Cardiac septum (tissue), 1 donor: ENCODE measurements at regions of chr5 and their contacts with region 1.

Region 1: GRCh38 chr5:142145106-142145900 is 36.7 kb downstream of the NDFIP1 start:
- DNase-seq: no peak

Region 2: GRCh38 chr5:141691867-141692532 is 453.3 kb before region 1 on chr5:
- intact Hi-C with region 1: loop called (anchors 10 kb)
- DNase-seq: peak; percentile 95

Region 3: GRCh38 chr5:141989718-141990117 is 155.6 kb before region 1 on chr5:
- intact Hi-C with region 1: loop called (anchors 2 kb)
- DNase-seq: no peak

Region 4: DNA sequence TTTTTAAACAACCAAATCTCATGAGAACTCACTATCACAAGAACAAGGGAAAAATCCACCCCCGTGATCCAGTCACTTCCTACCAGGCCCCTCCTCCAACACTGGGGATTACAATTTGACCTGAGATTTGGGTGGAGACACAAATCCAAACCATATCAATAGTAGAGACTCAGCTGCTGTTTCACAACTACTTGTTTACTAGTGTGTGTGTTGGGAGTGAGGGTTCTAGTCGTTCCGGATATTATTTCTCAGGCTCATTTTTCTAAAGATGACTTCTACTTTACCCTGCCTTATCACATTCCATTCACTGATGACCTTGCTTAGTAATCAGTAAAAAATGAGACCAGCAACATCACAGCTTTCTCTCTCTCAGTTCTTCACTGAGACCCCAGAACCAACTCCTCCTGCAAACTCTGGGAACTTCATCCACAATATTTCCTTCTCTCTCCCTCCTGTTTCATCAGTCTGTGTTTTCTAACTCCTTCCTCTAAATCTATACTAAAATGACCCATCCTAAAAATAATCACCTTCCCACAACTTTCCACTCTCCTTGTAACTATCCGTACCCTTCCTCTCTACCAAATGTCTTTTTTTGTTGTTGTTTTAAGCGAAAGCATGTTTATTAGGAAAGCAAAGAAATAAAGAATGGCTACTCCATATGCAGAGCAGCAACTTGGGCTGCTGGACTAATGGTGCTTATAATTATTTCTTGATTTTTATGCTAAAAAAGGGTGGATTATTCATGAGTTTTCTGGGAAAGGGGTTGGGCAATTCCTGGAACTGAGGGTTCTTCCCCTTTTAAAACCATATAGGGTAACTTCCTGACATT is 301.0 kb after region 1 on chr5:
- intact Hi-C with region 1: no loop called
- DNase-seq: no peak